ENCODE measurements at regions of chr10 and their contacts with region 1.

Region 1: DNA sequence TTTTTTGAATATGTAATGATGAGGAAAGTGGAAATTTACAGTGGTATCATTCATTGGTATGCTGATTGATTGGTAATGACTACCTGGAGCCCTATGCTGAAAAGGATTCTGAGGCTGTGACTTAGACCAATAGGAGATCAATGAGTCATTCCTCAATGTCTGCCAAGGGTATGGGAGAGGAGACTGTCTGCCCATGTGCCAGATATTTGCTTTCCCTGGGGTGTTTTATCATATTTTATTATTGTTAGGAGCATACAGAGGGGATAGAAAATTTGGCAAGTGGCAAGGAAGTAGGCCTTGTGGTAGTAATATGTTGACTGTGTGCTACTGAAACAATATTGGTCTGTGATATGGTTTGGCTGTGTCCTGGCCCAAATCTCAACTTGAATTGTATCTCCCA is 54.8 kb downstream of the ASAH2B start:
- DNase-seq: peak in 3 of 4 donors; percentile 10 to 26 (median 22)
- ATAC-seq: peak; percentile 79
- H3K4me3 ChIP-seq: no peak overlapping the region
- H3K27ac ChIP-seq: no peak overlapping the region
- H3K4me1 ChIP-seq: no peaks in the 10 kb centered on the region
- H3K27me3 ChIP-seq: no peaks in the 10 kb centered on the region
- CTCF ChIP-seq: no peak
- POLR2A ChIP-seq: no peak

Region 2: GRCh38 chr10:50231515-50232260 is 562.8 kb before region 1 on chr10:
- intact Hi-C with region 1: no loop called
- DNase-seq: no peak
- ATAC-seq: no peak
- H3K4me3 ChIP-seq: no peak overlapping the region
- H3K27ac ChIP-seq: no peak overlapping the region
- H3K4me1 ChIP-seq: peaks cover 14% of the 10 kb centered on the region
- H3K27me3 ChIP-seq: no peaks in the 10 kb centered on the region
- CTCF ChIP-seq: no peak
- POLR2A ChIP-seq: no peak

Region 3: GRCh38 chr10:50396491-50397311 is 397.8 kb before region 1 on chr10:
- intact Hi-C with region 1: no loop called
- DNase-seq: no peak
- ATAC-seq: no peak
- H3K4me3 ChIP-seq: no peak overlapping the region
- H3K27ac ChIP-seq: peak overlapping the region in 1 of 4 donors; percentile 36
- H3K4me1 ChIP-seq: peaks cover 37% of the 10 kb centered on the region
- H3K27me3 ChIP-seq: no peaks in the 10 kb centered on the region
- CTCF ChIP-seq: no peak
- POLR2A ChIP-seq: no peak

Region 4: DNA sequence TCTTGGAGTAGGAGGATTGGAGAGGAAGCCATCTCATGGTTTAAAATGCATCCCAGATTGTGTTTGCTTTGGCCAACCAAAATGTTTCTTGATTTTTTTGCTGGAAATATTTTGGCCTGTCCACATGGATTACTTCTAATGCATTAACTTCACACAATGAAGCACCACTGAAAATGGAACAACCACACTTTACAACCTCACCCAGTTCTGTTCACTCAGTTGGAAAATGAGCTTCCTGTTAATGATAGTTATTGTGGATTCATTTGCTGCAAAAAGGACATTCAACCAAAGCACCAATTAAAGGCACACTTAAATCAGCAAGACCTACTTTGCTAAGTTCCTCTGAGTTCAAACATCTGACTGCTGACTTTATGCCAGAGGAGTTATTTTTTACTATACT is 102.2 kb after region 1 on chr10:
- intact Hi-C with region 1: loop called (anchors 10 kb)
- DNase-seq: no peak
- ATAC-seq: no peak
- H3K4me3 ChIP-seq: no peak overlapping the region
- H3K27ac ChIP-seq: no peak overlapping the region
- H3K4me1 ChIP-seq: no peaks in the 10 kb centered on the region
- H3K27me3 ChIP-seq: no peaks in the 10 kb centered on the region
- CTCF ChIP-seq: no peak
- POLR2A ChIP-seq: no peak